ENCODE measurements at regions of chr1 and their contacts with region 1.

Region 1: GRCh38 chr1:110106013-110106941 is 6.0 kb upstream of the UBL4B start:
- DNase-seq: no peak
- H3K4me3 ChIP-seq: no peak overlapping the region
- H3K27ac ChIP-seq: no peak overlapping the region
- H3K4me1 ChIP-seq: no peaks in the 10 kb centered on the region
- H3K27me3 ChIP-seq: no peaks in the 10 kb centered on the region
- CTCF ChIP-seq: peak; percentile 51 to 76 (median 62)
- POLR2A ChIP-seq: no peak

Region 2: GRCh38 chr1:110053557-110054428 is 52.5 kb before region 1 on chr1:
- intact Hi-C with region 1: loop called (anchors 5 kb)
- DNase-seq: no peak
- H3K4me3 ChIP-seq: no peak overlapping the region
- H3K27ac ChIP-seq: no peak overlapping the region
- H3K4me1 ChIP-seq: peaks cover 6% of the 10 kb centered on the region
- H3K27me3 ChIP-seq: no peaks in the 10 kb centered on the region
- CTCF ChIP-seq: peak; percentile 65 to 93 (median 82)
- POLR2A ChIP-seq: no peak

Region 3: GRCh38 chr1:110309767-110310166 is 203.5 kb after region 1 on chr1:
- intact Hi-C with region 1: no loop called
- DNase-seq: no peak
- H3K4me3 ChIP-seq: no peak overlapping the region
- H3K27ac ChIP-seq: no peak overlapping the region
- H3K4me1 ChIP-seq: no peaks in the 10 kb centered on the region
- H3K27me3 ChIP-seq: no peaks in the 10 kb centered on the region
- CTCF ChIP-seq: no peak
- POLR2A ChIP-seq: no peak

Region 4: DNA sequence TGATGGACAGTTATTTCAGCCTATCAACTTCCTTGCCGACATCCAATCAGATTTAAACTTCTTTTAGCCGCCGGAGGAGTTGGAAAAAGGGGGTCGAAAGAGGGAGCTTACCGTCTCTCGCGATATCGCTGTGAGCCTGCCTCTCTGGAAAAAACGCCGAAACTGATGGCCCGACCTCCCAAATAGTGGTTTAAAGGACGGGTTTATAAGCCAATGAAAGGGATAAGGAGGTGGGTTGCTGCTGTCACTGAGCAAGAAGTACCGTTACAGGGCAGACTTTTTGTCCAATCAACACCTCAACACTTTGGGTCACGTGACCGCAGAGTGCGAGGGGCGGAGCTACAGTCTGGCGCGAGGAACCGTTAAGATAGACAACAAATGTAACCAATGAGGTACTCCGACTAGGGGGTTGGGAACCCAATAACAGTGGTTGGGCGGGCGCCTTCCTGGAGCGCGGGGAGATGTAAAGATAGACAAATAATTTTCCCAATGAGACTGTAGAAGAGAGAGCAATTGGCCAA is 232.7 kb after region 1 on chr1 and contains the start of gene RBM15:
- intact Hi-C with region 1: no loop called
- DNase-seq: peak; percentile 100
- H3K4me3 ChIP-seq: peak within 1 kb of the TSS; percentile 67 to 84
- H3K27ac ChIP-seq: peak within 1 kb of the TSS; percentile 98
- H3K4me1 ChIP-seq: peaks cover 53% of the 10 kb centered on the region
- H3K27me3 ChIP-seq: no peaks in the 10 kb centered on the region
- CTCF ChIP-seq: no peak
- POLR2A ChIP-seq: no peak
- total RNA-seq, gene RBM15: 36.6 TPM